ENCODE measurements at regions of chr2 and their contacts with region 1.

Region 1: DNA sequence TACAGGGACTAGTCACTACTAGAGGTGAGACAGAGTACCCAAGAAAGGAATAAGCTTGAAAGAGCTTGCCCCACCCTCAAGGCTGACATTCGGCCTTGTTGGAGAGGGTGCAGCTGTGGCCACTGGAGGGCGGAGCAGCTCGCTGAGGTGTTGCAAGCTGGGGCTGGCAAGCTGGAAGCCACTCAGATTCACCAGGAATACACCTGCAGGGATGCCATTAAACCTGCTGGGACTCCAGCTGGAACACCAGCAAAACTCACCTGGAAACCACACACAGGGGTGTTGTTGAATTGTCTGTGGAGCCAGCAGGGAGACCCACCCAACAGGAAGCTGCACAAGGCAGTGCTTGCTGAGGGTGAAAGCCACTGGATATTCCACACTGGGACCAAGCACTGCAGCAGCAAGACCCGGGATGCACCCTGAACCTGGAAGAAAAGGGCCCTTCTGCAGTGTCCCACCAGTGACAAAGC is 26.1 kb downstream of the KCTD18 start:
- H3K4me3 ChIP-seq: no peak overlapping the region
- H3K27ac ChIP-seq: no peak overlapping the region
- H3K4me1 ChIP-seq: no peaks in the 10 kb centered on the region; the same call in 1 of the 2 replicates
- CTCF ChIP-seq: peak; percentile 77

Region 2: GRCh38 chr2:199979832-199980628 is 503.7 kb before region 1 on chr2:
- CTCF ChIA-PET with region 1: interaction called, 45 read pairs
- POLR2A ChIA-PET with region 1: no interaction called
- H3K4me3 ChIP-seq: no peak overlapping the region
- H3K27ac ChIP-seq: no peak overlapping the region
- H3K4me1 ChIP-seq: no peaks in the 10 kb centered on the region; the same call in 1 of the 2 replicates
- CTCF ChIP-seq: peak; percentile 69

Region 3: GRCh38 chr2:200498402-200499162 is 14.8 kb after region 1 on chr2:
- CTCF ChIA-PET with region 1: interaction called, 21 read pairs
- POLR2A ChIA-PET with region 1: interaction called, 3 read pairs
- H3K4me3 ChIP-seq: no peak overlapping the region
- H3K27ac ChIP-seq: no peak overlapping the region
- H3K4me1 ChIP-seq: no peaks in the 10 kb centered on the region
- CTCF ChIP-seq: no peak

Region 4: GRCh38 chr2:200703127-200703925 is 219.6 kb after region 1 on chr2:
- CTCF ChIA-PET with region 1: interaction called, 105 read pairs
- POLR2A ChIA-PET with region 1: no interaction called
- H3K4me3 ChIP-seq: no peak overlapping the region
- H3K27ac ChIP-seq: no peak overlapping the region
- H3K4me1 ChIP-seq: peaks cover 2% of the 10 kb centered on the region; the same call in 1 of the 2 replicates
- CTCF ChIP-seq: 0 out of 2 replicates have a peak, but pooled peaks have one; percentile 18